ENCODE measurements at regions of chr2 and their contacts with region 1.

Region 1: GRCh38 chr2:144332356-144333142 is 187.4 kb downstream of the ZEB2 start:
- DNase-seq: peak; percentile 89 to 94
- ATAC-seq: peak; percentile 92 to 95 (median 94)
- H3K4me3 ChIP-seq: peak overlapping the region; percentile 74
- H3K27ac ChIP-seq: peak overlapping the region; percentile 85
- H3K4me1 ChIP-seq: peaks cover 25% of the 10 kb centered on the region
- H3K27me3 ChIP-seq: no peaks in the 10 kb centered on the region
- CTCF ChIP-seq: no peak

Region 2: GRCh38 chr2:143686585-143687164 is 645.9 kb before region 1 on chr2:
- intact Hi-C with region 1: no loop called
- DNase-seq: no peak
- ATAC-seq: no peak
- H3K4me3 ChIP-seq: no peak overlapping the region
- H3K27ac ChIP-seq: no peak overlapping the region
- H3K4me1 ChIP-seq: no peaks in the 10 kb centered on the region
- H3K27me3 ChIP-seq: no peaks in the 10 kb centered on the region
- CTCF ChIP-seq: peak; percentile 50

Region 3: GRCh38 chr2:144078106-144078505 is 254.4 kb before region 1 on chr2:
- intact Hi-C with region 1: no loop called
- DNase-seq: no peak
- ATAC-seq: no peak
- H3K4me3 ChIP-seq: no peak overlapping the region
- H3K27ac ChIP-seq: no peak overlapping the region
- H3K4me1 ChIP-seq: peaks cover 9% of the 10 kb centered on the region
- H3K27me3 ChIP-seq: no peaks in the 10 kb centered on the region
- CTCF ChIP-seq: no peak

Region 4: DNA sequence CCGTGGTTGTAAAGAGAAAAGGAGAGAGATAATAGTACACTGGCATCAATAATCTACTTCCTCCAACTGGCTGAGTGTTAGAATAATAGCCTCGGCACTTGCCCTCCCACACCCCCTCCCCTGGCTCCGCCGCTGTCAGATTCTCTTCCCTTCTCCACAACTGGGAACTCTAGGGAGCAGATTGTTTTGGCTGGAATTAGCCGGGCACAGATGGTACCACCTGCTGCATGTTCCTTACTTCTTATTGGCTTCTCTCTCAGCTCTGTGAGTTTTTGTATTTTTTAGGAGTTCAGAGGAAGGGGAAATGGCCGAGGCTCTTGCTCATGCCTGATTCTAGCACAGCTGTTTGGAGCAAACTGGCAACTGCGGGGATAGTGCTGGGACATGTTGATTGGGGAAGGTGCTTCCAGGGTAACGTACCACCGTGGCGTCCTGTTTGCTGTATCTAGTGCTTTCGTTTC is 47.3 kb after region 1 on chr2:
- intact Hi-C with region 1: loop called in 1 of 2 experiments (anchors 5 kb)
- DNase-seq: peak in 1 of 2 donors; percentile 39
- ATAC-seq: peak; percentile 56 to 80 (median 64)
- H3K4me3 ChIP-seq: peak overlapping the region; percentile 52
- H3K27ac ChIP-seq: no peak overlapping the region
- H3K4me1 ChIP-seq: peaks cover 9% of the 10 kb centered on the region
- H3K27me3 ChIP-seq: no peaks in the 10 kb centered on the region
- CTCF ChIP-seq: no peak

Region 5: GRCh38 chr2:144510294-144510991 is 177.9 kb after region 1 on chr2:
- intact Hi-C with region 1: loop called (anchors 5 kb)
- DNase-seq: no peak
- ATAC-seq: peak; percentile 76 to 89 (median 82)
- H3K4me3 ChIP-seq: peak overlapping the region; percentile 89
- H3K27ac ChIP-seq: peak overlapping the region; percentile 96
- H3K4me1 ChIP-seq: peaks cover 64% of the 10 kb centered on the region
- H3K27me3 ChIP-seq: no peaks in the 10 kb centered on the region
- CTCF ChIP-seq: no peak